HEK293T (cell line): ENCODE measurements at regions of chr6 and their contacts with region 1.

Region 1: GRCh38 chr6:27251606-27252251 is 4.2 kb downstream of the PRSS16 start:
- DNase-seq: peak; percentile 91

Region 2: DNA sequence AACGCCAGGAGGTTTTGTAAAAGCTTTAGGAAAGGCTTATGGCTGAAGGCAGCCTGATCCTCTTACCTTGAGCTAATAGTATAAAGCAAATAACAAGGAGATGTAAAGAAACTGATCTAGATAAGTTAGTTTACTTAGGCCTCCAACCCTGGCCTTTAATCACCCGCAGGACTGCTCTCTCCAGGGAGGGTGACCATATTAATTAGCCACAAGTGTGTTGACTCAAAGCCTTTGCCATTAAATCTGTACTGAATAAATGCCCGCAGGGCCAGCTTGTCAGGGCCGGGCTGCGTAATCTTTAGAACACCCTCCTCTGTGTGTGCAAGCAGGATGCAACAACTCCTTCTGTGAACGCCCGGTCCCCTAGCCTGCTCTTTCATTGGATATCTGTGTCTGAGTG is 10.3 kb before region 1 on chr6:
- CTCF ChIA-PET with region 1: interaction called, 4 read pairs
- POLR2A ChIA-PET with region 1: interaction called, 18 read pairs
- DNase-seq: no peak